Spleen (tissue), 13 donors: ENCODE measurements at regions of chr2 and their contacts with region 1.

Region 1: GRCh38 chr2:133886735-133887660 is 318.7 kb upstream of the NCKAP5 start:
- DNase-seq: peak; percentile 82
- H3K4me3 ChIP-seq: no peak overlapping the region
- H3K27ac ChIP-seq: no peak overlapping the region
- H3K4me1 ChIP-seq: peaks cover 0 to 13% (median 5%) of the 10 kb centered on the region in 6 donors
- H3K27me3 ChIP-seq: peaks cover 0 to 8% (median 0%) of the 10 kb centered on the region in 7 donors
- CTCF ChIP-seq: peak; percentile 22 to 73 (median 61)
- POLR2A ChIP-seq: no peak

Region 2: DNA sequence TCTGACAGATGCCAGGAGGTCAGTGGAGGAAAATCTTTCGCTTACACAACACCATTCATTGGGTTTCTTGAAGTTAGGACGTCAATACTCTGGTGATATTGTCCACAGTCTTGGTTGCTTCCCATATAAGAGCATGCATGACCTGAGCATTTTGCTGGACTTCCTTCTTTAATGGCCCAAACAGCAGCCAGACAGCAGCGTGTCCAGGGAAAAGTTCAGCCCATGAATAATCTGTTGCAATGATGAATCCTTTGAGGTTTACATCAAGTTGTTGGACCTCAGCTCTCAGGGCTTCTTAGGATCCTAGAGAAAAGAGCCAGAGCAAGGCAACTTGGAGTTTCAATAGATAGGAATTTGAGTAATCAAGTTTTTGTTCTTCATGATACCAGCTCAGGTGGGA is 211.3 kb after region 1 on chr2:
- intact Hi-C with region 1: no loop called
- DNase-seq: no peak
- H3K4me3 ChIP-seq: no peak overlapping the region
- H3K27ac ChIP-seq: no peak overlapping the region
- H3K4me1 ChIP-seq: no peaks in the 10 kb centered on the region
- H3K27me3 ChIP-seq: no peaks in the 10 kb centered on the region
- CTCF ChIP-seq: no peak
- POLR2A ChIP-seq: no peak

Region 3: GRCh38 chr2:134232868-134233727 is 346.1 kb after region 1 on chr2:
- intact Hi-C with region 1: no loop called
- DNase-seq: no peak
- H3K4me3 ChIP-seq: peak overlapping the region in 1 of 8 donors; percentile 43
- H3K27ac ChIP-seq: peak overlapping the region; percentile 4 to 88 (median 77)
- H3K4me1 ChIP-seq: peaks cover 17 to 92% (median 68%) of the 10 kb centered on the region in 6 donors
- H3K27me3 ChIP-seq: no peaks in the 10 kb centered on the region
- CTCF ChIP-seq: peak in 7 of 11 experiments; percentile 21 to 51 (median 34)
- POLR2A ChIP-seq: no peak

Region 4: GRCh38 chr2:134446383-134447017 is 559.5 kb after region 1 on chr2:
- intact Hi-C with region 1: loop called (anchors 10 kb)
- DNase-seq: peak; percentile 59
- H3K4me3 ChIP-seq: no peak overlapping the region
- H3K27ac ChIP-seq: no peak overlapping the region
- H3K4me1 ChIP-seq: peaks cover 0 to 24% (median 7%) of the 10 kb centered on the region in 6 donors
- H3K27me3 ChIP-seq: no peaks in the 10 kb centered on the region
- CTCF ChIP-seq: no peak
- POLR2A ChIP-seq: no peak